ENCODE measurements at regions of chr1 and their contacts with region 1.

Region 1: DNA sequence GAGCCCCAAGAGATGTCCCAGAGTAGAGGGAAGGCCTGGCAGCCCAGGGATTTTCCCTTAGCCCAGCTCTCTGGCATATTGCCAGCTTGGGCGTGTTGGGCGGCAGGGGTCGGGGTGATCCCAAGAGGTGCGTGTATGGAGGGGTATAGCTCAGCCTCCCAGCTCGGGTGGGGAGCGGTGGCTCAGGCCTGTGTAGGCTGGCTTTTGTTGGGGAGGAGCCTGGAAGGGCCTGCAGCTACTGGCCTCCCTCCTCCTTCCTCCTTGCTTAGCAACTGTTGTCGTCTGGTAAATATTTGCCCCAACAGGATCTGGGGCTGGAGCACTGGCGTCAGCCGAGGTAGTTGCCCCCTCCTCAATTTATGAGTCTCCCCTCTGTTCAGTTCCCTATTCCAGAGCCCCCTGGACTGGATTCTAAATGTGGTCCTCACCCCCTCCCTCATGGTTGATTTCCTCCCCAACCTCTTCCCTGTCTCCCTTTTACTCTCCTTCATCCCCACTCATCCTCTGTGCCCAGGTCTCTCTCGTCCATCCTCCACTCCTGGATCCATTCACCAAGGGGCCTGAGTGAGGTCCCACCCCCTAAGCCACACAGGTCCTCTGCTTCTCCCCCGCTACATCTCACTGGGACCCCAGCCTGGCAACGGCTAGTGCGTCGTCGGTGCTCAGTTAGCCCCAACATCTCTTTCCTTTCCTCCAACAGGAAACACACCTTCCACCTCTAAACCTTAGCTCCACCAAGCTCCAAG is 10.3 kb upstream of the LMNA start:
- DNase-seq: peak; percentile 64
- ATAC-seq: peak; percentile 30
- H3K4me3 Mint-ChIP-seq: no peak overlapping the region
- H3K27ac Mint-ChIP-seq: peak overlapping the region; percentile 58
- H3K4me1 Mint-ChIP-seq: peaks cover 74% of the 10 kb centered on the region
- H3K27me3 Mint-ChIP-seq: peaks cover 5% of the 10 kb centered on the region

Region 2: GRCh38 chr1:156114101-156114916 is 10.1 kb after region 1 on chr1 and contains the start of gene LMNA:
- CTCF ChIA-PET with region 1: interaction called, 929 read pairs
- POLR2A ChIA-PET with region 1: interaction called, 8 read pairs
- intact Hi-C with region 1: loop called (anchors 1 kb)
- DNase-seq: peak; percentile 90
- ATAC-seq: peak; percentile 91
- H3K4me3 Mint-ChIP-seq: peak within 1 kb of the TSS; percentile 93
- H3K27ac Mint-ChIP-seq: peak within 1 kb of the TSS; percentile 83
- H3K4me1 Mint-ChIP-seq: peaks cover 26% of the 10 kb centered on the region
- H3K27me3 Mint-ChIP-seq: peaks cover 19% of the 10 kb centered on the region
- total RNA-seq, gene LMNA: 184 to 218 TPM

Region 3: DNA sequence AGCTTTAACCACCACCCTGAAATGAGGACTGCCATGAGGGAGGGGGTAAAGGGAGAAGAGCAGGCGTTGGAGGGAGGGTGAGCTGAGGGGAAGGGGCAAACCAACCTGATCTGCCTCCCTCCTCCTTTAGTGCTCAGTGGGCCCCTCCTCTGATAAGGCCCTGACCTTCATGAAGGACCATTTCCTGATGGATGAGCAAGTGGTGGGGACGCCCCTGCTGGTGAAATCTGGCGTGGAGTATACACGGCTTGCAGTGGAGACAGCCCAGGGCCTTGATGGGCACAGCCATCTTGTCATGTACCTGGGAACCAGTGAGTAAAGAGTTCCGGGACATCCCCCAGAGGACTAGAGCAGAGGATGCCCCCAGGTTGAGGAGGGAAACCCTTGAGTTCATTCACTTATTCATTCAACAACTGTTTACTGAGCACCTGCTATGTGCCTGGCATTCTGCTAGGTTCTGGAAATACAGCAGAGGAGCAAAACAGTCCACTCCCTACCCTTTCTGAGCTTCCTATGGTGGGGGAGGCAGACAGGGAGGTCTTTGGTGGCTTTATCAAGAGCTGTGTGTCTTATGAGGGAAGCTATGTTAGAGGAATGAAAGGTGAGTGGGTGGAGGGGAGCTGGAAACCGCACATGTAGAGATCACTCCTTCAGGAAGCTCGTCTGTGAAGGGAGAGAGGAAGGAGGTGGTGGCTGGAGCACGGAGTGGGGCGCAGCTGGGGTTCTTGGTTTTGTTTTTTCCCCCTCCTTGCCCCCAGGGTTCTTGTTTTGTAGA is 68.6 kb after region 1 on chr1:
- CTCF ChIA-PET with region 1: no interaction called
- POLR2A ChIA-PET with region 1: no interaction called
- intact Hi-C with region 1: no loop called
- DNase-seq: peak; percentile 35
- ATAC-seq: peak; percentile 54
- H3K4me3 Mint-ChIP-seq: no peak overlapping the region
- H3K27ac Mint-ChIP-seq: peak overlapping the region; percentile 76
- H3K4me1 Mint-ChIP-seq: peaks cover 28% of the 10 kb centered on the region
- H3K27me3 Mint-ChIP-seq: no peaks in the 10 kb centered on the region

Measured in activated CD4-positive, alpha-beta T cell treated with anti-CD3 and anti-CD28 coated beads for 36 hours (primary cell).